ENCODE measurements at regions of chr16 and their contacts with region 1.

Region 1: DNA sequence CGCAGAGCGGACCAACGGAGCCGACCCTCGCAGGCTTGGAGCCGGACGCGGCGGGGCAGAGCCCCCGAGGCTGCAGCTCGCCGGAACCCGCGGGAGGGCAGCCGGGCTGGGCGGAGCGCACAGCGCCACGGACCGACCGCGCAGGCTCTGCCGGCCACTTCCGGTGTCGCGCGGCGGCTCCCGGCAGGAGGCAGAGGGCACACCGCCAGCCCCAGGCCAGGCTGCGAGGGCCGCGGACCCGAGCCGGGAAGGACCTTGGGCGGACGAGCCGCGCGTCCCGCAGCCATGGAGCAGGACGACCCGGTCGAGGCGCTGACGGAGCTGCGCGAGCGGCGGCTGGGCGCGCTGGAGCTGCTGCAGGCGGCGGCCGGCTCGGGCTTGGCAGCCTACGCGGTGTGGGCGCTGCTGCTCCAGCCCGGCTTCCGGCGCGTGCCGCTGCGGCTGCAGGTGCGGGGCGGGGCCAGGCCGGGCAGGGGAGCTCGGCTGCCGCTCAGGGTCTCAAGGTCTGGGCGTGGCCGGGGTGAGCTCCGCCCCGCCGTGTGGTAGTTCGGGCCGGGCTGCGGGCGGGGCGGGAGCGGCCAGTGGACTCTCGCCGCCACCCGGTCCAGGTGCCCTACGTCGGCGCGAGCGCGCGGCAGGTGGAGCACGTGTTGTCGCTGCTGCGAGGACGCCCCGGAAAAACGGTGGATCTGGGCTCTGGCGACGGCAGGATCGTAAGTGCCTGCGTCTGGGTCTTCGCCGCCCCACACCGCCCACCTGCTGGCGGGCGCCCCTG is at the start of gene ANTKMT:
- DNase-seq: peak; percentile 80
- ATAC-seq: peak; percentile 72
- H3K4me3 Mint-ChIP-seq: peak within 1 kb of the TSS; percentile 77
- H3K27ac Mint-ChIP-seq: peak within 1 kb of the TSS; percentile 77
- H3K4me1 Mint-ChIP-seq: peaks cover 22% of the 10 kb centered on the region
- H3K27me3 Mint-ChIP-seq: peaks cover 3% of the 10 kb centered on the region
- total RNA-seq, gene ANTKMT: 12.3 to 14.2 TPM

Region 2: GRCh38 chr16:626787-627186 is 94.4 kb before region 1 on chr16:
- CTCF ChIA-PET with region 1: no interaction called
- POLR2A ChIA-PET with region 1: no interaction called
- DNase-seq: no peak
- ATAC-seq: no peak
- H3K4me3 Mint-ChIP-seq: no peak overlapping the region
- H3K27ac Mint-ChIP-seq: no peak overlapping the region
- H3K4me1 Mint-ChIP-seq: no peaks in the 10 kb centered on the region
- H3K27me3 Mint-ChIP-seq: no peaks in the 10 kb centered on the region

Region 3: GRCh38 chr16:733382-734207 is 12.4 kb after region 1 on chr16:
- CTCF ChIA-PET with region 1: interaction called, 10 read pairs
- POLR2A ChIA-PET with region 1: interaction called, 10 read pairs
- DNase-seq: no peak
- ATAC-seq: peak; percentile 31
- H3K4me3 Mint-ChIP-seq: no peak overlapping the region
- H3K27ac Mint-ChIP-seq: no peak overlapping the region
- H3K4me1 Mint-ChIP-seq: peaks cover 20% of the 10 kb centered on the region
- H3K27me3 Mint-ChIP-seq: no peaks in the 10 kb centered on the region

Region 4: DNA sequence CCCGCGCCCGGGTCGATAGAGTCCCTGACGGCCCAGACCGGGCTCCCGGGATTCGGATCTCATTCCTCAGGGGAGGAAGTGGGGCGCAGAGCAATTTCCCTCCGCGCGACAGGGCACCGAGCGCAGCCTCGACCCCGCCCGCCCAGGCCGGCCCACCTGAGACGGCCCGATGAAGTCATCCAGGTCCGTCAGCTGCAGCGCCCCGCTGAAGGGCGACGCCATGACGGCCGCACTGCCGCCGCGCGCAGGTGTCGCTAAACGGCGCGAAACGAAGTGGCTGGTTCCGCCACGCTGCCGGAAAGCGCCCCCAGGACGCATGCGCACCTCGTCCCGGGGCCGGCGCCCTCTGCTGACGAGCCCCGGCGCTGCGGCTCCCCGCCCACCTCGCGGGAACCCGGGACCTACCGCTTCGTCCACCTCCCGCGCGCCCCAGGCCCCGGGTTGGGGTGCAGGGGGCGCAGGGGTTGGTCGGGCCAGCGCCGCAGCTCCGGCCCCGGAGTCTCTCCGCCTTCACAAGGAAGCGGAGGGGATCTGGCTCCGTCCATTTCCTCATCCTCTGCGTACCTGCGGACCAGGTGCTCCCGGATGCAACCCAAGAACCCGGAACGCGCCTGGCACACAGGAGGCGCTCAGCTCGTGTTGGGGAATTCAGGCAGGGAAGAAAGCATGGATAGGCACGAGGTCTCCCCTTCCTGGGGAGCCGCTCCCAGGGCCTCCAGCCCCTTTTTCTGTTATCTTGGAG is 19.8 kb after region 1 on chr16 and contains the start of gene CIAO3:
- CTCF ChIA-PET with region 1: interaction called, 16 read pairs
- POLR2A ChIA-PET with region 1: no interaction called
- DNase-seq: peak; percentile 93
- ATAC-seq: peak; percentile 95
- H3K4me3 Mint-ChIP-seq: peak within 1 kb of the TSS; percentile 85
- H3K27ac Mint-ChIP-seq: peak within 1 kb of the TSS; percentile 71
- H3K4me1 Mint-ChIP-seq: peaks cover 29% of the 10 kb centered on the region
- H3K27me3 Mint-ChIP-seq: no peaks in the 10 kb centered on the region
- total RNA-seq, gene CIAO3: 24.9 to 32.4 TPM

Measured in activated CD8-positive, alpha-beta T cell treated with anti-CD3 and anti-CD28 coated beads, Interleukin-2, amount 10 ng/mL, durations not matched to agents 7 days and 5 days (primary cell).